ENCODE measurements at regions of chr9 and their contacts with region 1.

Region 1: DNA sequence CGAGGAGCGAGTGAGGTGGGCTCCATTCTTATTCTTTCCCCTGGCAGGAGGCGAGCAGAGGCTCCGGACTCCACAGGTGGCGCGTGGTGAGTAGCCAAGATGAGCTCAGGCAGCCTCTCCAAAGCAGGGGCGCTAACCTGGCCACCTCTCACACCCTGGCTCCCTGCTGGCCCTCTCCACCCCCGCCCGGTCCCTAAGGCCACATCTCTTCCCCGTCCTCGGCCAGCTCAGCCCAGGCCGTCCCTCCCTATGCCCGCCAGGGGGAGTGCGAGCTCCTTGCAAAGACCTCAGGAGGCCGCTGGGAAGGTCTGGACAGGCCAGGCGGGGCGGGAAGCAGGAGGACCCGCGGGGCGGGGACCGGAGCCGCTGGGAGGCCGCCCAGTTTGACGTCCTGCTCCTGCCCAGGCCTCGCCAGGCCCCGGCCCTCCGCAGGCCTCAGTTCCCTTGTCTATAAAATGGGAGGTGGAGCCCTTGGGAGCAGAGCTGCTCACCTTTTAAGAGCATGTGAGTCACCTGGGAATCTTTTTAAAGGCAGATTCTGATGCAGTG is 46.3 kb upstream of the GGTA1 start:
- DNase-seq: peak; percentile 89
- ATAC-seq: peak; percentile 98
- H3K4me3 ChIP-seq: peak overlapping the region in 2 of 3 experiments; percentile 16 to 36; a peak in 2 of 6 replicates
- H3K27ac ChIP-seq: no peak overlapping the region
- H3K4me1 ChIP-seq: 0 out of 2 replicates have a peak, but pooled peaks cover 13% of the 10 kb centered on the region
- H3K27me3 ChIP-seq: peaks cover 0 to 5% of the 10 kb centered on the region in 2 experiments; a peak in 1 of 5 replicates
- CTCF ChIP-seq: peak; percentile 99
- EP300 ChIP-seq: no peak
- POLR2A ChIP-seq: no peak
- RAD21 ChIP-seq: peak; percentile 96

Region 2: GRCh38 chr9:121609845-121610570 is 64.1 kb after region 1 on chr9:
- CTCF ChIA-PET with region 1: no interaction called
- POLR2A ChIA-PET with region 1: no interaction called
- in situ Hi-C with region 1: no loop called
- intact Hi-C with region 1: loop called (anchors 5 kb)
- DNase-seq: peak; percentile 93
- ATAC-seq: peak; percentile 88
- H3K4me3 ChIP-seq: no peak overlapping the region
- H3K27ac ChIP-seq: no peak overlapping the region
- H3K4me1 ChIP-seq: peaks cover 61% of the 10 kb centered on the region
- H3K27me3 ChIP-seq: no peaks in the 10 kb centered on the region; a peak in 1 of 5 replicates
- CTCF ChIP-seq: no peak
- EP300 ChIP-seq: no peak; a peak in 1 of 4 replicates
- POLR2A ChIP-seq: no peak
- RAD21 ChIP-seq: peak; percentile 32; the same call in 1 of the 2 replicates

Region 3: DNA sequence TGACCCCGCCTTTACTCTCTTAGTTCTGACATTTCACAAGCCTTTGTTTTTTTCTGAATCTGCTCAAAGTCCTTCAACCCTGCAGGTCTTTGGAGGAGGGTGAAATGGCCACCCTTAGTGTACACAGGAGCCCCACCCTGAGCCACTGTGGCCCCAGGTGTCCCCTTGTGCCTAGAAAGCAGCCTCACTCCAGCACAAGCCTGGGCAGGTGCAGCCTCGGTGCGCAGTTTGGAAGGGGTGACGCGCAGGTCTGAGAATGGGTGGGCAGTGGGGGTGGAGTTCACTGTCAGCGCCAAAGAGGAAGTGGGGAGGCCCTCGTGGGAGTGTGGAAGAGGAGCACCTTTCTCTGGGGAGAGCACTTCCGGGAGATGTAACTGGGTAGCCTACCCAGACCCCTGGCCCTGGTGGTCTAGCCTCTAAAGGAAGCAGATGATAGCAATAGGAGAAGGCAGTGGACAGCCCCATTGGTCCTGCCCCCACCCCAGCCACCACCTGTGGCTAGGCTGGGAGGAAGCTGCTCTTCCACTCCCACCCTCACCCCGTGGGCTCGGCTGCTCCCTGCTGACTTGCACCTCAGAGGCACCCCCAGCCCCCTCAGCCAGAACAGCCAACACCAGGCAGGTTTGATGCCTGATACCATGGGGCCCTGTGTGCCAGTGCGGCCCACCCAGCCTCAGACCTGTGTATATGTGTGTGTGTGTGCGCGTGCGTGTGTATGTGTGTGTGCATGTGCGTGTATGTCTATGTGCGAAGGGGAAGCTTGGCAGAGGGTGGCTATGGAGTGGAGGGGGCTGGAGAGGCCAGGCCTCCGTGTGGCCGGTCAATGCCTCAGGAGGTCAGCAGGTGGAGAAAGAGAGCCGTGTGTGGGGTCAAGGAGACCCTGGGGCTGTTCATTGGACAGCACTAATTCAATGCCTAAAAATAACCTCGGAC is 88.6 kb after region 1 on chr9:
- CTCF ChIA-PET with region 1: no interaction called
- POLR2A ChIA-PET with region 1: no interaction called
- in situ Hi-C with region 1: no loop called
- intact Hi-C with region 1: loop called (anchors 5 kb)
- DNase-seq: peak; percentile 57
- ATAC-seq: peak; percentile 79
- H3K4me3 ChIP-seq: peak overlapping the region; percentile 23 to 63 (median 30); a peak in 4 of 6 replicates
- H3K27ac ChIP-seq: no peak overlapping the region
- H3K4me1 ChIP-seq: peaks cover 52% of the 10 kb centered on the region
- H3K27me3 ChIP-seq: no peaks in the 10 kb centered on the region
- CTCF ChIP-seq: peak; percentile 91
- EP300 ChIP-seq: peak in 1 of 2 experiments; percentile 24; a peak in 1 of 4 replicates
- POLR2A ChIP-seq: no peak
- RAD21 ChIP-seq: peak; percentile 77

Region 4: DNA sequence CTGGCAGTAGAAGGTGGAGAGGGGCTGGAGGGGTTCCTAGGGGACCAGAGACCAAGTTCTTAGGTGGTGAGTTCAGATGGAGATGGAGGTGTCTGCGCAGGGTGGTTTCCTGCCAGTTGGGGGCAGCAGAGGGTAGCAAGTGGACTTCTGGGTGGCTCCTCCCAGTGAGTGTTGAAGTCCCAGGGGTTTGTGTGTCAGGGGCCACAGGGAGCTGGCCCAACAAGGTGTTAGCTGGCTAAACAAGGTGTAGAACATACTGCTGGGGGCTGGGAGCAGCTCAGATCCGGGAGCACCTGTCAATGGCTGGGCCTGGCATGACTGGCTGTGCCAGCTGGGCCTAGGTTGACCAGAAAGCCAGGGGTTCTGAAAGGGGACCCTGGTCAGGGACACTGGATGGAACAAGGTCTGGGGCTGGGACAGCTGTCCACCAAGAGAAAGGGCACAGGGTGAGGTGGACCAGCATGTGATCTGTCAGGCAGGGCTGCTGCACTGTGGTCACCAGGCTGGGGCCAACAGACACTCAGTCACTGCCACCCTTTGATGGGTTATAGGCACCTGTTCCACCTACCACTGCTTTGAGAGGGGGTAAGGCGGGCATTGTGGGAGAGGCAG is 141.1 kb after region 1 on chr9:
- CTCF ChIA-PET with region 1: interaction called, 8 read pairs
- POLR2A ChIA-PET with region 1: no interaction called
- in situ Hi-C with region 1: loop called (anchors 5 kb)
- intact Hi-C with region 1: loop called (anchors 2 kb)
- DNase-seq: peak; percentile 63
- ATAC-seq: peak; percentile 87
- H3K4me3 ChIP-seq: no peak overlapping the region
- H3K27ac ChIP-seq: no peak overlapping the region
- H3K4me1 ChIP-seq: peaks cover 36% of the 10 kb centered on the region
- H3K27me3 ChIP-seq: no peaks in the 10 kb centered on the region
- CTCF ChIP-seq: peak; percentile 96
- EP300 ChIP-seq: no peak
- POLR2A ChIP-seq: no peak
- RAD21 ChIP-seq: peak; percentile 75

Region 5: GRCh38 chr9:121744002-121744686 is 198.2 kb after region 1 on chr9:
- CTCF ChIA-PET with region 1: no interaction called
- POLR2A ChIA-PET with region 1: no interaction called
- in situ Hi-C with region 1: no loop called
- intact Hi-C with region 1: loop called (anchors 5 kb)
- DNase-seq: peak; percentile 74
- ATAC-seq: peak; percentile 83
- H3K4me3 ChIP-seq: peak overlapping the region; percentile 70 to 85 (median 71)
- H3K27ac ChIP-seq: peak overlapping the region; percentile 48
- H3K4me1 ChIP-seq: peaks cover 91% of the 10 kb centered on the region
- H3K27me3 ChIP-seq: no peaks in the 10 kb centered on the region
- CTCF ChIP-seq: peak; percentile 94
- EP300 ChIP-seq: no peak
- POLR2A ChIP-seq: peak in 1 of 2 experiments; percentile 34; a peak in 1 of 4 replicates
- RAD21 ChIP-seq: peak; percentile 75

Region 6: GRCh38 chr9:121992571-121993212 is 446.7 kb after region 1 on chr9:
- CTCF ChIA-PET with region 1: interaction called, 3 read pairs
- POLR2A ChIA-PET with region 1: no interaction called
- in situ Hi-C with region 1: loop called (anchors 5 kb)
- intact Hi-C with region 1: loop called (anchors 2 kb)
- DNase-seq: peak; percentile 65
- ATAC-seq: peak; percentile 53
- H3K4me3 ChIP-seq: no peak overlapping the region
- H3K27ac ChIP-seq: no peak overlapping the region
- H3K4me1 ChIP-seq: peaks cover 38% of the 10 kb centered on the region
- H3K27me3 ChIP-seq: no peaks in the 10 kb centered on the region
- CTCF ChIP-seq: peak; percentile 79
- EP300 ChIP-seq: no peak
- POLR2A ChIP-seq: no peak
- RAD21 ChIP-seq: peak; percentile 71

Measured in HepG2 (cell line).